Mammary epithelial cell (primary cell): ENCODE measurements at regions of chr10 and their contacts with region 1.

Region 1: DNA sequence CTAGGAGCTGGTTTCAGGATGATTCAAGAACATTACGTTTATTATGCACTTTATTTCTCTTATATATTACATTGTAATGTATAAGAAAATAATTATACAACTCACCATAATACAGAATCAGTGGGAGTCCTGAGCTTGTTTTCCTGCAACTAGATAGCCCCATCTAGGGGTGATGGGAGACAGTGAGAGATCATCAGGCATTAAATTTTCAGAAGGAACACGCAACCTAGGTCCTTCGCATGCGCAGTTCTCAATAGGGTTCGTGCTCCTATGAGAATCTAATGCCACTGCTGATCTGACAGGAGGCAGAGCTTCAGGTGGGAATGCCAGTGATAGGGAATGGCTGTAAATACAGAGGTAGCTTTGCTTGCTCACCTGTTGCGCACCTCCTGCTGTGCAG is 137.9 kb downstream of the ANKRD30A start:
- DNase-seq: no peak
- H3K4me3 ChIP-seq: no peak overlapping the region
- H3K27ac ChIP-seq: no peak overlapping the region
- H3K4me1 ChIP-seq: no peaks in the 10 kb centered on the region
- H3K27me3 ChIP-seq: no peaks in the 10 kb centered on the region
- CTCF ChIP-seq: no peak

Region 2: GRCh38 chr10:36899651-36900050 is 363.7 kb before region 1 on chr10:
- CTCF ChIA-PET with region 1: interaction called, 3 read pairs
- dilution Hi-C with region 1: no loop called
- in situ Hi-C with region 1: no loop called
- intact Hi-C with region 1: loop called (anchors 1 kb)
- DNase-seq: no peak
- H3K4me3 ChIP-seq: no peak overlapping the region
- H3K27ac ChIP-seq: no peak overlapping the region
- H3K4me1 ChIP-seq: no peaks in the 10 kb centered on the region
- H3K27me3 ChIP-seq: no peaks in the 10 kb centered on the region
- CTCF ChIP-seq: no peak

Region 3: DNA sequence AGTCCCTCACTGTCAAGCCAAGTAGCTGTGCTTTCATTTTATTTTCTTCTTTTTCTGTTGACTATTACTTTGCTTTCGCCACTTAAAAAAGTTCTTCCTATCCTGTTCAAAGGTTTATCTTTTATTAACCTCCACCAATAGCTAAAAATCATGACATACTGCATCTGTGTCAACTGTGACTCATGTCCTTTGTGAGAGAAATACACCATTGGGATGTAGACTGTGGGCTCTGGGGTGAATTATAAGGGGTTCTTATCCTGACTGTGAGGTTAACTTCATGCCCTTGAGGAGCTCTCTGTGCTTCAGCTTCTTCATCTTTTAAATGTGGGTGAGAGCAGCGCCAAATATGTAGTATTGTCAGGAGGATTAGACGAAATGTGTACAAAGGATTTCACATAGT is 209.9 kb before region 1 on chr10:
- CTCF ChIA-PET with region 1: no interaction called
- dilution Hi-C with region 1: no loop called
- in situ Hi-C with region 1: no loop called
- intact Hi-C with region 1: no loop called
- DNase-seq: no peak
- H3K4me3 ChIP-seq: no peak overlapping the region
- H3K27ac ChIP-seq: no peak overlapping the region
- H3K4me1 ChIP-seq: no peaks in the 10 kb centered on the region
- H3K27me3 ChIP-seq: no peaks in the 10 kb centered on the region
- CTCF ChIP-seq: no peak